ENCODE measurements at regions of chr3 and their contacts with region 1.

Region 1: DNA sequence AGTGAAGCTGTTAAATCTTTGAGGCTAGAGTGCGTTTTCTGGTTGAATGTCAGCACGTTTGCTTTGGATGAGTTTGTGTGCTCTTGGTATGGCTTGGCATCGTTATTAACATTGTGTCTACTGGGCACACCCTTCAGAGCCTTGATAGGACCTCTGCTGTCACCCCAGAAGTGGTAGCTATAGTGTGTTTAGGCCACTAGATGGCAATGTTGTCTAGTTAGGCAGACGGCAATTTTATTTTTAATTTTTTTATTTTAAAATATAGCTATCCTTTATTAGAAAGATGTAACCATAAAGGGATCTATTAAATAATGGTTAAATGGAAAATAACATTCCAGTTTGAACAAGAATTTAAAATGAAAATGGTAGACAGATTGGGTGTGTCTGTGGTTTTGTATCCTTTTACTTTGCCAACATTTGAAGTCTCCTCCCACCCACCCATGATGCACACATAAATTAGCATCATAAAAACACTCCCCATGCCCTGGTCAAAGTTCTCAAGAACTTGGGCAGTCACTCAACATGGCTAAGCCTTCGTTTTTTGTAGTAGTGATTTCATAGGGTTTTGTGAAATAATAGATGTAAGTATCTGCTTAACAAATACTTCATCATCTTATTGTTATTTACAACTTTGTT is 200.7 kb downstream of the KCNH8 start:
- DNase-seq: no peak
- ATAC-seq: peak in 2 of 4 donors; percentile 56 to 66
- H3K4me3 ChIP-seq: no peak overlapping the region
- H3K27ac ChIP-seq: no peak overlapping the region
- H3K4me1 ChIP-seq: no peaks in the 10 kb centered on the region
- H3K27me3 ChIP-seq: no peaks in the 10 kb centered on the region
- CTCF ChIP-seq: peak; percentile 66

Region 2: DNA sequence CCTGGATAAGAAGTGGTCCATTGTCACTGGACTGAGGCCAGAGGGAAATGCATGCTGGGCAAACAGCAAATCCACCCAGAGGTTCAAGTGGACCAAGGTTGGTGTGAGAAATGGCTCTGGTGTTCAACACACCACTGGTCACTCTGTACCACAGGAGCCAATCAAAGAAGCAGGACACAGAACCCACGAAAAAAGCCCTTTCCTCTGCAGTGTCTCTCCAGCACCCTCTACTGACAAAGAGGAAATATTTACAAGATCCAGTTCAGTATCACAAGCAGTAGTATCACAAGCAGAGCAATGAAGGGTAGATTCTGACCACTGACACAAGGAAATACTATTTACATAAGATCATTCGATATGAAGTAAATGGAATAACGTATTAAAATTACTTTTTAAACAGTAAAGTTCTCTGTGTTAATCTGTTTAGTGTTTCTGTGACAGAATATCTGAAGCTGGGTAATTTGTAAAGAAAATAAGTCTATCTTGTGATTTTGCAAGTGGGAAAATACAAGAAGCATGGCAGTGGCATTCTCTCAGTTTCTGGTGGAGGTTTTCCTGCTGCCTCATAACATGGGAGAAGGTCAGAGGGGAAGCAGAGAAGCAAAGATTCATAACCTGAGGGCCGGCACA is 194.3 kb after region 1 on chr3:
- intact Hi-C with region 1: loop called (anchors 5 kb)
- DNase-seq: no peak
- ATAC-seq: peak; percentile 34 to 79 (median 72)
- H3K4me3 ChIP-seq: no peak overlapping the region
- H3K27ac ChIP-seq: no peak overlapping the region
- H3K4me1 ChIP-seq: no peaks in the 10 kb centered on the region
- H3K27me3 ChIP-seq: no peaks in the 10 kb centered on the region
- CTCF ChIP-seq: peak; percentile 43

Region 3: DNA sequence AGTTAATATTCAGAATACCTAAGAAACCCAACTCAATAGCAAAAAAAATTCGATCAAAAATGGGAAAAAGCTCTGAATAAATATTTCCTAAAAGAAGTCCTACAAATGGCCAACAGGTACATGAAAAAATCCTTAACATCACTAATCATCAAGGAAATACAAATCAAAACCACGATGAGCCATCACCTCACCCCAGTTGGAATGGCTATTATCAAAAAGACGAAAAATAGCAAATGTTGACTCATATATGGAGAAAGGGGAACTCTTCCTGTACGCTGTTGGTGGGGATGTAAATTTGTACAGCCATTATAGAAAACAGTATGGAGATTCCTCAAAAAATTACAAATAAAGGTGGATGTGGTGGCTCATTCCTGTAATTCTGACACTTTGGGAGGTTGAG is 866.6 kb after region 1 on chr3:
- intact Hi-C with region 1: no loop called
- DNase-seq: no peak
- ATAC-seq: no peak
- H3K4me3 ChIP-seq: no peak overlapping the region
- H3K27ac ChIP-seq: no peak overlapping the region
- H3K4me1 ChIP-seq: no peaks in the 10 kb centered on the region
- H3K27me3 ChIP-seq: no peaks in the 10 kb centered on the region
- CTCF ChIP-seq: no peak

Measured in psoas muscle (tissue), 8 donors.